ENCODE measurements at regions of chr1 and their contacts with region 1.

Region 1: DNA sequence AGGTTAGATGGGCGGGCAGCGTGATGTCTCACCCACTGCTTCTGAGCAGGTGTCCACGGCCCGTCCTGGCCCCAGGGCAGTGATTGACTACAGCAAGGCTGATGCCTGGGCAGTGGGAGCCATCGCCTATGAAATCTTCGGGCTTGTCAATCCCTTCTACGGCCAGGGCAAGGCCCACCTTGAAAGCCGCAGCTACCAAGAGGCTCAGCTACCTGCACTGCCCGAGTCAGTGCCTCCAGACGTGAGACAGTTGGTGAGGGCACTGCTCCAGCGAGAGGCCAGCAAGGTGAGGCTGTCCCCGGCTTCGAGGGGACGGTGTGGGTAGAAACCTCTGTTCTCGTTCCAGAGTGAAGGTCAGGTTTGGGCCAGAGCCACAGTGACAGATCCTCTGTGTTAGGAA is 12.2 kb downstream of the DDOST start:
- DNase-seq: no peak
- H3K4me3 ChIP-seq: no peak overlapping the region
- H3K27ac ChIP-seq: no peak overlapping the region
- H3K4me1 ChIP-seq: no peaks in the 10 kb centered on the region
- H3K27me3 ChIP-seq: no peaks in the 10 kb centered on the region
- CTCF ChIP-seq: no peak
- EP300 ChIP-seq: no peak
- POLR2A ChIP-seq: no peak
- RAD21 ChIP-seq: no peak

Region 2: DNA sequence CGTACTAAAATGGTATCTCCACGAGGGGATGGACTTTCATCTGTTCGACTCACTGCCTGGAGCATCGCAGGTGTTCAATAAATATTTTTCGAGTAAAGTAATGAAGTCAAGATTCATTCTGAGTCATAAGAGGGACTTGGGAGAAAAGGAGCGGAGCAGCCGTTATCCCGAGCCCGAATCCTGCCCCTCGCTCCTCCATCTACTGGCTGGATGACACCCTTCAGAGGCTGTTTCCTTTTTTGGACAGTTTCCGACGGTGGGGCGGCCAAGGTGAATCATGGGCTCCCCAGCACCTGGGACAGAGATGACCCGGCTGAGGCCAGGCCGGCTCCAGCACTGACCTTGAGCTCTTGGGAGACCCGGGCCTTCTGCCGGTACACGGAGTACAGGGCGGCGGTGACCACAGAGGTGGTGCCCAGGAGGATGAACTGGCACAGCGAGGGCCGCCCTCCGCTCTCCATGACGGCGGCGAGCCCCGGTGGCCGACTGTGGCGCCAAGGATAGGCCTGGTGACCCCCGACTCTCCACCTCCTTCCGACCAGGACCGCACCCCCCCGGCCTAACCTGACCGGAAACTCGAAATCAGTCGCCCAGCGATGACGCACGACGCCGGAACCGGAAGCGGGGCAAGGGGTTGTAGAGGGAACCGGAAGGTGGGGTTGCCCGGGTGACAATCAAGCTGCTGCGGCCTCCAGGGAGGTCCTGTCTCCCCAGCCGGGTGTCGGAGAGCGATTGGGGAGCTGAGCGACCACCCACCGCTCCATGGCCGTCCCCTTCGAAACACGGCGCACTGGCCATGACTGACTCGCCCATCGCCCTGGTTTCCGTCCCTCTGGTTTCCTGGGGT is 141.2 kb before region 1 on chr1 and contains the start of gene MUL1:
- CTCF ChIA-PET with region 1: no interaction called
- POLR2A ChIA-PET with region 1: no interaction called
- DNase-seq: peak; percentile 83 to 99
- H3K4me3 ChIP-seq: peak within 1 kb of the TSS; percentile 86 to 94 (median 88)
- H3K27ac ChIP-seq: peak within 1 kb of the TSS; percentile 67; the same call in 1 of the 2 replicates
- H3K4me1 ChIP-seq: peaks cover 0 to 3% (median 2%) of the 10 kb centered on the region in 4 experiments; a peak in 2 of 7 replicates
- H3K27me3 ChIP-seq: peaks cover 0 to 3% (median 1%) of the 10 kb centered on the region in 4 experiments; a peak in 3 of 7 replicates
- CTCF ChIP-seq: no peak
- EP300 ChIP-seq: no peak
- POLR2A ChIP-seq: peak; percentile 85 to 87
- RAD21 ChIP-seq: no peak
- total RNA-seq, gene MUL1: 16.4 and 16.9 TPM in 2 replicates

Region 3: DNA sequence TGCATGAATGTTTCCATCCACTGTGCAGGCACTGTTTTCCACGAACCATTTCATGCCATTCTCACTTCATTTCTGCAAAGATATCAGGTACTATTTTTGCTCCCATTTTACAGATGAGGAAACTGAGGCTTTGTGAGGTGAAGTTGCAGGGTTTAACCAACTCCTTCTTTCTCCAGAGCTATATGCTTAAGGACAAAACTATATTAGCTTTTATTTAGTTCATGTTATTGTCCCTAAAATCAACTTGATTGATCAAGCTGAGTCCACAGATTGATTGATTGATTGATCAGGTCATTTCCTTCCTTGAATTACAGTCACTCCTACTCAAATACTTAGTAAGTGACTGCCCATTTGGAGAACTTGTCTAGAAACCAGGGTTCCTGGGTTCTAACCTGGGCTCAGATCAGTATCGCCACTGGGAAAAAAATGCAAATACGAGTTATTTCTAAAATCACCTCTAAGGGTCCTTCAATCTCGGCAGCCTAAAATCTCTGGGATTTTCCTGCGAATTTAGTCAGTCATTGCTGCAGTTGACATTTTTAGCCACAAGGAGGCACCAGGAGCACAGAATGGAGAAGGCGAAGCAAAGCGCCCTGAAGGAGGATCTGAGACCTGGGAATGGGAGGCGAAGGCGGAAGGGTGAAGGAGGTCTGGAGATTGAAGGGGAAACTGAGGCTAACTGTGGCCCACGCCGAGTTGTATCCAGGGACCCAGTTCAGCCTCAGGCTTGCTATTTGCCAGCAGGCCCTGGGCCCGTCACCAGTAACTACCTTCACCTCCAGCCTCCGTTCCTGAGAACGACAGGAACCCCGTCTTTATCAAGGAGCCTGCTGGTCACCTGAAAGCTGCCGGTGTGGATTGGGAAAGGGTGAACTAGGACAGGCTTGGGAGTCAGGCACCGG is 126.7 kb before region 1 on chr1:
- CTCF ChIA-PET with region 1: interaction called, 14 read pairs
- POLR2A ChIA-PET with region 1: interaction called, 4 read pairs
- DNase-seq: peak; percentile 46 to 94
- H3K4me3 ChIP-seq: 0 out of 8 replicates have a peak overlapping the region, but pooled peaks of 1 of the 4 experiments have one; percentile 14
- H3K27ac ChIP-seq: no peak overlapping the region
- H3K4me1 ChIP-seq: peaks cover 0 to 1% (median 0%) of the 10 kb centered on the region in 4 experiments; a peak in 1 of 7 replicates
- H3K27me3 ChIP-seq: no peaks in the 10 kb centered on the region; a peak in 1 of 7 replicates
- CTCF ChIP-seq: peak; percentile 67 to 94 (median 92)
- EP300 ChIP-seq: no peak
- POLR2A ChIP-seq: no peak
- RAD21 ChIP-seq: peak; percentile 96 to 98

Region 4: DNA sequence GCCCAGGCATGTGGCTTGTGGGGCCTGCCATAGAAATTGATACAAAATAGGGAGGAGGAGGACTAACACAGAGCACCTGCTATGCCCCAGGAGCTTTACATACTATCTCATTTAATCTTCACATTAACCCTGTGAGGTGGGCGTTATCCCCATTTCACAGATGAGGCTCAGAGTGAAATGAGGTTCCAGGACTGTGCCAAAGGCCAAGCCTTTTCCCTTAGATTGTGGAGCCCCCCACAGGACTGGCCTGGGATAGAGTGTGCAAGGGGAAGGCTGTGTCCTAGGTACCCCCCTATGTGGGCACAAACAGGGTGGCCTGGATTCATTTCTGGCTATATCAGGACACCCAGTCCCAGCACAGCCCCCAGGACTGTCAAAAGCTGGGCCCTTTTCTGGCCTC is 14.4 kb after region 1 on chr1:
- CTCF ChIA-PET with region 1: interaction called, 10 read pairs
- POLR2A ChIA-PET with region 1: interaction called, 4 read pairs
- DNase-seq: no peak
- H3K4me3 ChIP-seq: no peak overlapping the region
- H3K27ac ChIP-seq: no peak overlapping the region
- H3K4me1 ChIP-seq: peaks cover 0 to 9% (median 4%) of the 10 kb centered on the region in 4 experiments; a peak in 4 of 7 replicates
- H3K27me3 ChIP-seq: no peaks in the 10 kb centered on the region
- CTCF ChIP-seq: peak; percentile 11 to 31 (median 19); a peak in 3 of 4 replicates
- EP300 ChIP-seq: no peak
- POLR2A ChIP-seq: no peak
- RAD21 ChIP-seq: peak; percentile 40 to 57